HepG2 (cell line): ENCODE measurements at regions of chr20 and their contacts with region 1.

Region 1: GRCh38 chr20:23420943-23421931 is at the start of gene NAPB:
- DNase-seq: peak; percentile 92
- ATAC-seq: peak; percentile 98
- H3K4me3 ChIP-seq: peak within 1 kb of the TSS; percentile 76 to 99 (median 93)
- H3K27ac ChIP-seq: peak within 1 kb of the TSS; percentile 66
- H3K4me1 ChIP-seq: peaks cover 62% of the 10 kb centered on the region
- H3K27me3 ChIP-seq: no peaks in the 10 kb centered on the region
- CTCF ChIP-seq: peak; percentile 53; the same call in 1 of the 2 replicates
- EP300 ChIP-seq: no peak; a peak in 1 of 4 replicates
- POLR2A ChIP-seq: peak; percentile 75 to 96
- RAD21 ChIP-seq: no peak
- total RNA-seq, gene NAPB: 9.5 and 15.2 TPM in 2 replicates

Region 2: DNA sequence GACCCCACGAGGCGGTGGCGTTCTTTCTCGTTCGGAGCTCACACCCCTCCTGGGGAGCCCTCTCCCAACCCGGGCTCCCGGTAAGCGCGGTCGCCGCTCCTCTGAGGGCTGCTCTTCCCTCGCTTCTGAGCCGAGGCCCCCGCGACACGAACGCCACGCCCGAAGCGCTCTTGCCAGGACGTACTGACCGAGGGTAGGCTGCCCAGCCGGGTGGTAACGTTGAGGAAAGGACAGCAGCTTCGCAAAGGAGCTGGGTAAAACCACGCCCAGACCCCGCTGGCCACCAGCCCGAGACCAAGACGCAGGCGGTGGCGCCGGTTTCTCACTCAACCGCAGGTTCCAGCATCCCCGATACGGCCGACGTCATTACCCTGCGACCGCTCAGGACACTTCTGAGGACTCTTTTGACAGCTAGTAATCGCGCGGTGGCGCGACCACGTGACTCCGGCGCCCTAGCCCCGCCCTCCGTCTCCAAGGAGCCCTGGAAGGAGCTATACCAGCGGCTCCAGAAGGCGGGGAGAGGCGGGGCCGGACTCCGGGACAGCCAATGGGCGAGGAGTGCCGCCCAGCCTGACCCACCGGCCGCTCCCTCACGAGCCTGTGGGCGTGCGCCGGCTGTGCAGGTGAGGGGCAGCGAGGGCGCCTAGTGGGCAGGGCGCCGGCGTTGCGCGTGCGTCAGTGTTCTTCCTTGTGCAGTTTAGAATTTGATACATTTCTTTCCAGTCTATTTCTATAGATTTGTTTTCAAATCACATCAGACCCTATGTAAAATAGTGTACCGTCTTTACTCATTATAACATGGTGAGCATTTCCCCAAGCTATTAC is 63.3 kb before region 1 on chr20:
- CTCF ChIA-PET with region 1: no interaction called
- POLR2A ChIA-PET with region 1: interaction called, 26 read pairs
- in situ Hi-C with region 1: no loop called
- intact Hi-C with region 1: loop called (anchors 5 kb)
- DNase-seq: peak; percentile 98
- ATAC-seq: peak; percentile 76
- H3K4me3 ChIP-seq: peak overlapping the region; percentile 55 to 91 (median 65)
- H3K27ac ChIP-seq: peak overlapping the region; percentile 77
- H3K4me1 ChIP-seq: peaks cover 45% of the 10 kb centered on the region
- H3K27me3 ChIP-seq: no peaks in the 10 kb centered on the region; a peak in 1 of 5 replicates
- CTCF ChIP-seq: peak; percentile 52
- EP300 ChIP-seq: 0 out of 4 replicates have a peak, but pooled peaks of 1 of the 2 experiments have one; percentile 9
- POLR2A ChIP-seq: peak; percentile 73 to 85
- RAD21 ChIP-seq: no peak; the same call in 1 of the 2 replicates

Region 3: GRCh38 chr20:23404196-23404595 is 17.0 kb before region 1 on chr20:
- CTCF ChIA-PET with region 1: no interaction called
- POLR2A ChIA-PET with region 1: interaction called, 17 read pairs
- in situ Hi-C with region 1: no loop called
- intact Hi-C with region 1: no loop called
- DNase-seq: peak; percentile 54
- ATAC-seq: peak; percentile 94
- H3K4me3 ChIP-seq: no peak overlapping the region
- H3K27ac ChIP-seq: no peak overlapping the region
- H3K4me1 ChIP-seq: peaks cover 39% of the 10 kb centered on the region
- H3K27me3 ChIP-seq: no peaks in the 10 kb centered on the region
- CTCF ChIP-seq: no peak
- EP300 ChIP-seq: no peak
- POLR2A ChIP-seq: no peak
- RAD21 ChIP-seq: no peak

Region 4: DNA sequence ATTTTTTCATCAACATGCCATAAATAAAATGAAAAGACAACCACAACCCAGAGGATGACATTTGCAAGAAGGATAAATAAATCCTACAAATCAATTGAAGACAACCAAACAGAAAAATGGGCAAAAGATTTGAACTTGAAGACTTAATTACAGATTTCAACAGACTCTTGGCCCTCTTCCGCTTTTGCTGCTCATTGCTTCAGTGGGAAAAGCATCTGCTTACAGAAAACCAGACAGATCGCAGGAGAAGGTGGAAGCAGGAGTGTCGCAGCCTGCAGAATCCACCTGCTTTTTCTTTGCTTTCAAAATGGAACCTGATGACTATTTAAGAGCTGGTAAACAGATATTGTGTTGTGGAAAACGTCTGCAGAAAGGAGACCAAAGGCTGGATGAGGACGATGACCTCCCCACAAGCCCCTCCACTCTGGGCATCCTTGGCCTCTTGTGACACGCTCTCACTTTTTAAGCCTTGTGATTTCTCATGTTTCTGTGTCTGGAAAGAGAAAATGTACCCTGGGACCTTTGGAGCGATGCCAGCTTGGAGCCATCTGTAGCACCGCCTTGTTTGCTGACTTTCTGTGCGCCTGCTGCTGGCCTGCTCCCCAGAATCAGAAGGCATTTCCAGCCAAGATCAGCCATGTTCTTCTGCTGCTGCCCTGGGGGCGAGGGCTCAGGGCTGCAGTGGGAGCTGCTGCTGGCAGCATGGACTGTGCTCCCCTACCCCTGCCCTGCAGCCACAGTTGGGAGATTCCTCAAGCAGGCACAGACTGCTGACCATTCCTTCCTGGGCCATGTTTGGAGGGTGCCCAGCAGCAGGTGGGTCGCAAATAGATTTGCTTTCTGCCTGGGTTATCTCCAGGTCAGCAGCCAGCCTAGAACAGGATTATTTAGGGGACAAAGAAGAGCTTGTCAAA is 14.6 kb after region 1 on chr20:
- CTCF ChIA-PET with region 1: no interaction called
- POLR2A ChIA-PET with region 1: interaction called, 30 read pairs
- in situ Hi-C with region 1: no loop called
- intact Hi-C with region 1: no loop called
- DNase-seq: peak; percentile 86
- ATAC-seq: peak; percentile 93
- H3K4me3 ChIP-seq: peak overlapping the region; percentile 38 to 67 (median 47)
- H3K27ac ChIP-seq: peak overlapping the region; percentile 50
- H3K4me1 ChIP-seq: peaks cover 41% of the 10 kb centered on the region
- H3K27me3 ChIP-seq: no peaks in the 10 kb centered on the region; a peak in 1 of 5 replicates
- CTCF ChIP-seq: no peak; the same call in 1 of the 2 replicates
- EP300 ChIP-seq: no peak
- POLR2A ChIP-seq: 0 out of 4 replicates have a peak, but pooled peaks of 1 of the 2 experiments have one; percentile 43
- RAD21 ChIP-seq: no peak

Region 5: DNA sequence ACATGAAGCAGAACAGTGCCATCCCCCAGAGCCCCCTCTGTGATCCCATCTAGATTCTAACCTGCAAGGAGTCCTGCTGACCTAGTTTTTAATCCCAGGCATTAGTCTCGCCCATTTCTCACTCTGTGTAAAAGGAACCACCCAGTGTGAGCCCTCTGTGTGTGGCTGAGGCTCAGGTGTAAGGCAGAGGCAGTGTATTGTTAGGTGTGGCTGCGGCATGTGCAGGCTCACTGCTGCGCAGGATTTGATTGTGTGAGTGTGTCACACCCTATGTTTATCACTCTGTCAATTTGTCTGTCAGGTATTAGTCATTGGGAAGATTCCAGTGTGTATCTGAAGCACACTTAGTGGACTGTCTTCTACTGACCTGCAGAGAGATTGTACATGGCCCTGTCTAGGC is 56.0 kb after region 1 on chr20:
- CTCF ChIA-PET with region 1: no interaction called
- POLR2A ChIA-PET with region 1: no interaction called
- in situ Hi-C with region 1: no loop called
- intact Hi-C with region 1: no loop called
- DNase-seq: no peak
- ATAC-seq: no peak
- H3K4me3 ChIP-seq: no peak overlapping the region
- H3K27ac ChIP-seq: no peak overlapping the region
- H3K4me1 ChIP-seq: peaks cover 14% of the 10 kb centered on the region
- H3K27me3 ChIP-seq: no peaks in the 10 kb centered on the region
- CTCF ChIP-seq: no peak
- EP300 ChIP-seq: no peak
- POLR2A ChIP-seq: no peak
- RAD21 ChIP-seq: no peak

Region 6: GRCh38 chr20:23988561-23988960 is 567.3 kb after region 1 on chr20 and contains the start of gene GGTLC1:
- CTCF ChIA-PET with region 1: no interaction called
- POLR2A ChIA-PET with region 1: no interaction called
- in situ Hi-C with region 1: no loop called
- intact Hi-C with region 1: no loop called
- DNase-seq: no peak
- ATAC-seq: no peak
- H3K4me3 ChIP-seq: no peak within 1 kb of the TSS
- H3K27ac ChIP-seq: no peak within 1 kb of the TSS
- H3K4me1 ChIP-seq: peaks cover 2% of the 10 kb centered on the region
- H3K27me3 ChIP-seq: no peaks in the 10 kb centered on the region
- CTCF ChIP-seq: no peak
- EP300 ChIP-seq: no peak
- POLR2A ChIP-seq: no peak
- RAD21 ChIP-seq: no peak
- total RNA-seq, gene GGTLC1: not detected in 2 replicates